CD8-positive, alpha-beta memory T cell (primary cell): ENCODE measurements at regions of chr10 and their contacts with region 1.

Region 1: GRCh38 chr10:96830511-96831199 is 1.4 kb upstream of the LCOR start:
- DNase-seq: peak; percentile 65 to 85 (median 73)
- H3K4me3 ChIP-seq: no peak overlapping the region
- H3K4me3 Mint-ChIP-seq: peak overlapping the region; percentile 81 to 94 (median 83)
- H3K27ac ChIP-seq: peak overlapping the region; percentile 78
- H3K27ac Mint-ChIP-seq: peak overlapping the region; percentile 82 to 97 (median 90)
- H3K4me1 ChIP-seq: peaks cover 36% of the 10 kb centered on the region
- H3K4me1 Mint-ChIP-seq: peaks cover 38 to 43% (median 43%) of the 10 kb centered on the region in 3 donors
- H3K27me3 ChIP-seq: no peaks in the 10 kb centered on the region
- H3K27me3 Mint-ChIP-seq: peaks cover 0 to 2% of the 10 kb centered on the region in 2 donors

Region 2: DNA sequence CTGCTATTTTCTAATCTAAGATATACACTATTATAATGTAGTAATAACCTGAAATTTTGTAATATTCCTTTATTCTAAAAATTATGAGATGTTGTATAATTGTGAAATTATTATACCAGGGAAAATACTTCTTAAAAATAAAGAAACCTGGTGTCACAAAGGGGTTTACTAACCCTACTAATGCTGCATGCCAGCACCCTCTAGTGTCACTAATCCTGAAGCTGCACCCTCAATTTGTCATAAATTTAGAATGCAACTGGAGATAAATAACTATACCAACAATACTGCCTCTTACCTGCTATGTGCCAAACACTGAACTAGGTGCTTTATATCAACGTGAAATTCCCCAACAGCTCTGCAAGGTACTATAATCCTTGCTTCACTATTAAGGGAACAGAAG is 274.7 kb before region 1 on chr10:
- CTCF ChIA-PET with region 1: no interaction called
- POLR2A ChIA-PET with region 1: no interaction called
- DNase-seq: no peak
- H3K4me3 ChIP-seq: no peak overlapping the region
- H3K4me3 Mint-ChIP-seq: no peak overlapping the region
- H3K27ac ChIP-seq: no peak overlapping the region
- H3K27ac Mint-ChIP-seq: no peak overlapping the region
- H3K4me1 ChIP-seq: no peaks in the 10 kb centered on the region
- H3K4me1 Mint-ChIP-seq: peaks cover 3 to 6% (median 4%) of the 10 kb centered on the region in 3 donors
- H3K27me3 ChIP-seq: no peaks in the 10 kb centered on the region
- H3K27me3 Mint-ChIP-seq: no peaks in the 10 kb centered on the region

Region 3: DNA sequence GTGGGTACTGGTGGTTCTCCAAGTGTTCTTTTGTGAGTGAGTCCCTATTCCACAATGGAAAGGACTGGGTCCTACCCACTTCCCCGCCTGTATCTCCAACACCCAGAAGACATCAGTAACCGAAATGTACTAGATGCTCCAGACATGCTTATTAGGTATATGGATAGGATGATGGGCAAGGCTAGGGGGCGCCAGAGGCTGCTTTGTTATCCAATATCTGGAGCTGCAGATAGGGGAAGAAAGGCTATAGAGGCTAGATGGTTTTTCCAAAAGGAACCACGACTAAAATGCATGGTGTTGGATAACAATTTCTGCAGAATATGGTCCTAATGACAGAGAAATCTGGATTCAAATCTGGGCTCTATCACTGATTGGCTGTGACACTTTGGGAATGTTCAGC is 187.7 kb before region 1 on chr10:
- CTCF ChIA-PET with region 1: interaction called, 14 read pairs
- POLR2A ChIA-PET with region 1: interaction called, 4 read pairs
- DNase-seq: peak; percentile 7 to 75 (median 56)
- H3K4me3 ChIP-seq: no peak overlapping the region
- H3K4me3 Mint-ChIP-seq: no peak overlapping the region
- H3K27ac ChIP-seq: no peak overlapping the region
- H3K27ac Mint-ChIP-seq: peak overlapping the region in 3 of 8 donors; percentile 51 to 77 (median 77)
- H3K4me1 ChIP-seq: no peaks in the 10 kb centered on the region
- H3K4me1 Mint-ChIP-seq: peaks cover 22 to 25% (median 22%) of the 10 kb centered on the region in 3 donors
- H3K27me3 ChIP-seq: no peaks in the 10 kb centered on the region
- H3K27me3 Mint-ChIP-seq: peaks cover 0 to 2% of the 10 kb centered on the region in 2 donors

Region 4: DNA sequence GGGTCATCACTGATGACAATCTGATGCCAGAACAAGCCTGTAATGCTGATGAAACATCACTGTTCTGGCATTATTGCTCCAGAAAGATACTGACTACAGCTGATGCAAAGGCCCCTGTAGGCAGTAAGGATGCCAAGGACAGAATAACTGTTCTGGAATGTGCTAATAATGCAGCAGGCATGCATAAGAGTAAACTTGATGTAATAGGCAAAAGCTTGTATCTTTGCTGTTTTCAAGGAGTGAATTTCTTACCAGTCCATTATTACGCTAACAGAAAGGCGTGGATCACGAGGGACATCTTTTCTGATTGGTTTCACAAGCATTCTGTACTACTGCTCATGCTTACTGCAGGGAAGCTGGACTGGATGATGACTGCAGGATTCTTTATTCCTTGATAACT is 20.2 kb after region 1 on chr10:
- CTCF ChIA-PET with region 1: no interaction called
- POLR2A ChIA-PET with region 1: no interaction called
- DNase-seq: no peak
- H3K4me3 ChIP-seq: no peak overlapping the region
- H3K4me3 Mint-ChIP-seq: no peak overlapping the region
- H3K27ac ChIP-seq: no peak overlapping the region
- H3K27ac Mint-ChIP-seq: no peak overlapping the region
- H3K4me1 ChIP-seq: no peaks in the 10 kb centered on the region
- H3K4me1 Mint-ChIP-seq: peaks cover 45 to 64% (median 54%) of the 10 kb centered on the region in 3 donors
- H3K27me3 ChIP-seq: no peaks in the 10 kb centered on the region
- H3K27me3 Mint-ChIP-seq: no peaks in the 10 kb centered on the region